ENCODE measurements at regions of chr9 and their contacts with region 1.

Region 1: DNA sequence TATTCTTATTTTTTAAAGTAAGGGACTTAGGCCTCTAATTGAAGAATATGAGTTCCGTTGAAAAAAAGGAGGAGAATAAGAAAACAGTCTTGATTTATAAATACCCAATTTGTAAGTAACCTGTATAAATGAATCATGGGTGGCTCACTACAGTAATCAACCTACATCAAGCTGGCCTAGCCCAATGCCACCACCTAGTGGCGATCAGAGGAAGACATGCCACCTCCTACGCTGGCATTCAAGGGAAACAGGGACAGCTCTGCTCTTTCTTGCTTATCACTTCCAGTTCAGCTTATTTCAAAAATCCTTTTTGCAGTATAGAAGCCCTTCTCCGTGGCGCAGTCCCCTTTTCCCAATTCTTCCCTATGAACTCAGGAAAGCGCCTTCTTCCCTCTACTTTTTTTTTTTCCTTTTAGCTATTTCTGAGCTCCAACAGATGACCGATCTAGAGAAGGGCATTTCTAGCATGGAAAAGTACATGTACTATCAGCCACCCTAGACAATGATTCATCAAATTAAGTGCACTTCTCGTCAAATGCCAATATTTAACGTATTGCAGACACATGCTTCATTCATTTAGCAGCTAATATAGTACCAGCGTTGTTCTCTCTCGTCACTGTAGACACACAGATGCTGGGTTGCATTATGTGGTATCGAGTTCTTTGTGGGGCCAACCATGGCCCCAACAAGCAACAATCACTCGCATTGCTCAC is 28.3 kb downstream of the PTPN3 start:
- DNase-seq: peak; percentile 78
- CTCF ChIP-seq: peak; percentile 93

Region 2: GRCh38 chr9:109182940-109183798 is 286.6 kb before region 1 on chr9:
- CTCF ChIA-PET with region 1: interaction called, 15 read pairs
- POLR2A ChIA-PET with region 1: no interaction called
- DNase-seq: peak; percentile 50
- CTCF ChIP-seq: peak; percentile 52

Region 3: GRCh38 chr9:109244157-109245132 is 225.4 kb before region 1 on chr9:
- CTCF ChIA-PET with region 1: interaction called, 12 read pairs
- POLR2A ChIA-PET with region 1: no interaction called
- DNase-seq: peak; percentile 71
- CTCF ChIP-seq: peak; percentile 95

Region 4: GRCh38 chr9:109411798-109412352 is 57.9 kb before region 1 on chr9:
- CTCF ChIA-PET with region 1: interaction called, 17 read pairs
- POLR2A ChIA-PET with region 1: no interaction called
- DNase-seq: peak; percentile 61
- CTCF ChIP-seq: peak; percentile 84

Region 5: GRCh38 chr9:109453210-109453842 is 16.5 kb before region 1 on chr9:
- CTCF ChIA-PET with region 1: interaction called, 70 read pairs
- POLR2A ChIA-PET with region 1: no interaction called
- DNase-seq: no peak
- CTCF ChIP-seq: no peak

Region 6: GRCh38 chr9:109482391-109482916 is 12.7 kb after region 1 on chr9:
- CTCF ChIA-PET with region 1: interaction called, 19 read pairs
- POLR2A ChIA-PET with region 1: no interaction called
- DNase-seq: no peak
- CTCF ChIP-seq: no peak